Heart left ventricle (tissue), 16 donors: ENCODE measurements at regions of chr10 and their contacts with region 1.

Region 1: GRCh38 chr10:32279795-32280194 is 67.2 kb downstream of the EPC1 start:
- DNase-seq: no peak
- ATAC-seq: no peak
- H3K4me3 ChIP-seq: no peak overlapping the region
- H3K27ac ChIP-seq: no peak overlapping the region
- H3K4me1 ChIP-seq: peaks cover 0 to 13% (median 0%) of the 10 kb centered on the region in 12 donors
- H3K27me3 ChIP-seq: no peaks in the 10 kb centered on the region
- CTCF ChIP-seq: no peak
- POLR2A ChIP-seq: no peak

Region 2: DNA sequence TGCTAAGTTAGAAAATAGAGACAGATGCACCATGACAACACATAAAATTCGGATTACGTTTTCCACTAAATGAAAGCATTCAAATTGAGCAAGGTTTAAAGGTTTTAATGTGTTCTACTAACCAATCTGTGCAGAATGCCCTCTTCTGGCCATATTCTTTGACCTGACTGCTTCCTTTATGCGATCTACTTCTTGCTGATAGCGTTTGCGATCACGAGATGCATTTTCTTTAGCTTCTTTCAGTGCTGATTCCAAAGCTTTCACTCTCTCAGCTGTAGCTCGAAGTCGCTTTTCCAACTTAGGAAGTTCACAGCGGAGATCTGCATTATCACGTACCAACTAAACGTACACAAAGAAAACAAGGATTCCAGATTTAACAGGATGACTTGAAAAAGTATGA is 262.8 kb before region 1 on chr10:
- intact Hi-C with region 1: loop called in 1 of 10 experiments (anchors 10 kb)
- DNase-seq: no peak
- ATAC-seq: no peak
- H3K4me3 ChIP-seq: no peak overlapping the region
- H3K27ac ChIP-seq: no peak overlapping the region
- H3K4me1 ChIP-seq: no peaks in the 10 kb centered on the region
- H3K27me3 ChIP-seq: no peaks in the 10 kb centered on the region
- CTCF ChIP-seq: no peak
- POLR2A ChIP-seq: no peak

Region 3: DNA sequence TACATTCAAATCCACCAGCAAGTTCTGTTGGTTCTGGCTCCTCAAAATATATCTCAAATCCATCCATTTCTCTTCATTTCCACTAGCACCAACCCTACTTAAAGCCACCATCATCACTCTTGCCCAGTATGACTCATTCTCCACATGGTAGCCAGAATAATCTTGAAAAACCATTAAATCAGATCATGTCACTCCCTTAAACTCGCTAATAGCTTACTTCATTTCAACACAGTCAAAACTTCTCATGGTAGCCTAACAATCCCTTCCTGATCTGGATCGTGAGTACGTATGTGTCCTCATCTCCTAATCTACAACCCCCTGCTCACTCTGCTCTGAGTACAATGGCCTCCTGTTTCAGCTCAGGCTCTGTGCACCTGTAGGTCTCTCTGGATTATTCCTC is 58.5 kb after region 1 on chr10:
- intact Hi-C with region 1: loop called in 2 of 10 experiments (anchors 5 kb)
- DNase-seq: no peak
- ATAC-seq: no peak
- H3K4me3 ChIP-seq: no peak overlapping the region
- H3K27ac ChIP-seq: no peak overlapping the region
- H3K4me1 ChIP-seq: peaks cover 3 to 99% (median 91%) of the 10 kb centered on the region in 12 donors
- H3K27me3 ChIP-seq: no peaks in the 10 kb centered on the region
- CTCF ChIP-seq: no peak
- POLR2A ChIP-seq: no peak